Mammary epithelial cell (primary cell): ENCODE measurements at regions of chr21 and their contacts with region 1.

Region 1: GRCh38 chr21:38805328-38806152 is at the start of gene ETS2:
- DNase-seq: peak; percentile 92
- H3K4me3 ChIP-seq: peak within 1 kb of the TSS; percentile 88 to 93 (median 89)
- H3K27ac ChIP-seq: peak within 1 kb of the TSS; percentile 90
- H3K4me1 ChIP-seq: peaks cover 46% of the 10 kb centered on the region
- H3K27me3 ChIP-seq: no peaks in the 10 kb centered on the region
- CTCF ChIP-seq: no peak
- total RNA-seq, gene ETS2: 60.3 to 62.3 TPM

Region 2: GRCh38 chr21:38733973-38734546 is 71.5 kb before region 1 on chr21:
- CTCF ChIA-PET with region 1: no interaction called
- dilution Hi-C with region 1: no loop called
- in situ Hi-C with region 1: loop called in 1 of 2 experiments (anchors 5 kb)
- intact Hi-C with region 1: loop called (anchors 1 kb)
- DNase-seq: peak; percentile 46
- H3K4me3 ChIP-seq: no peak overlapping the region
- H3K27ac ChIP-seq: no peak overlapping the region
- H3K4me1 ChIP-seq: peaks cover 15% of the 10 kb centered on the region
- H3K27me3 ChIP-seq: no peaks in the 10 kb centered on the region
- CTCF ChIP-seq: peak; percentile 94 to 97

Region 3: DNA sequence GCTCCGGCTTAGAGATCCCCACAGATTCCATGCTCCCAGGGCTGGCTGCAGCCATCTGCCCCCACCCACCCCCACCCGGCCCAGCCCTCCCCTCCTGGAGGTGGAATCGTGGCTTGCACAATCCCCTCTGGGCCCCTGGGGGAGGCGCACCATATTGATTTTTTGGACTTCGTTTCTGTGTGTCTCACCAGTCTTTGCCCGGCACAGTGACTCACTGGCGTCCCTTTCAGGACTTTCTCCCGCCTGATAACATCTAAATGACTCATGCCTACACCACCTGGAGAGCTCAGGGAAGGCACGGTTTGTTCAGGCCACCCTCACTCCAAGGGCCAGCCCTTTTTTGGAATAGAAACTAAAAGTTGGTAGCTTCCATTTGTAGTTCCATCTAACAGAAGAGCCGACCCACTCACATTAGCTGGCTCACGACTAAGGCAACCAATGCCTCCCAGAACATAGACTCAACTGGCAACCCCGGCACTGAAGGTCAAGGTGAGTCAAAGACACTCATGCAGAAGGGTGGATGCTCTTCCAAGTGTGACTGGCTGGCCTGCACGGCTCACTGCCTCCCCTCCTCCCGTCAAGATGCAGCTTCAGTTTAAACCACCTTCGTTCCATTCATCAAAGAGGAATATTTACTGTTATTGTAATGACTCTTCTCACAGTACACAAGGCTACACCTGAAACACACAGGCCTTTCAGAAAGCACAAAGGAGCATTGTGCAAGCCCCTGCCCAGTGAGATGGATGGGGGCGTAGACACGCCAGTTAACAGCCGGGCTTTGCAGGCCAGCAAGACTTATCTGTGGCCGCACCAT is 17.9 kb before region 1 on chr21:
- CTCF ChIA-PET with region 1: no interaction called
- dilution Hi-C with region 1: no loop called
- in situ Hi-C with region 1: no loop called
- intact Hi-C with region 1: loop called (anchors 1 kb)
- DNase-seq: peak; percentile 99
- H3K4me3 ChIP-seq: peak overlapping the region in 2 of 3 experiments; percentile 33 to 41
- H3K27ac ChIP-seq: peak overlapping the region; percentile 89
- H3K4me1 ChIP-seq: peaks cover 15% of the 10 kb centered on the region
- H3K27me3 ChIP-seq: no peaks in the 10 kb centered on the region
- CTCF ChIP-seq: no peak

Region 4: GRCh38 chr21:38853421-38853919 is 47.9 kb after region 1 on chr21:
- CTCF ChIA-PET with region 1: no interaction called
- dilution Hi-C with region 1: no loop called
- in situ Hi-C with region 1: no loop called
- intact Hi-C with region 1: no loop called
- DNase-seq: peak; percentile 98
- H3K4me3 ChIP-seq: no peak overlapping the region
- H3K27ac ChIP-seq: peak overlapping the region; percentile 45
- H3K4me1 ChIP-seq: peaks cover 28% of the 10 kb centered on the region
- H3K27me3 ChIP-seq: no peaks in the 10 kb centered on the region
- CTCF ChIP-seq: no peak

Region 5: DNA sequence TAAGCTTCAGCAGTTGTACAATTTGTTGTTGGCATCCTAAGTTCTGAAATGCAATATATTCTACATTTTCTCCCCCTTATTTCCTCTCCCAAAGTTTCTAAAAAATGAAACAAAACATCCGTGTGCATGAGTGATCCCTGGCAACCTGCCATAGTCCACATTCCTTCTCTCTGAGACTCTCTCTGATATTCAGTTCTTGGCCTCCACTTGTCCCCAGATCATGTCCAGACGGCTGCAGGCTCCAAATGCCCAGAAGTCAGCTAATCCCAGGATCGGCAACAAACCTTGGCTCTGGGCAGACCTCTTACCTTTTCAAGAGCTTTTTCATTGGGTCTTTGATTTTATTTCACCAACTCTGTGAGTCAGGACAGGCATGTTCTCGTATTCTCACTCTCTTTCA is 188.0 kb after region 1 on chr21:
- CTCF ChIA-PET with region 1: no interaction called
- dilution Hi-C with region 1: no loop called
- in situ Hi-C with region 1: no loop called
- intact Hi-C with region 1: loop called (anchors 5 kb)
- DNase-seq: peak; percentile 92
- H3K4me3 ChIP-seq: peak overlapping the region in 1 of 3 experiments; percentile 3
- H3K27ac ChIP-seq: peak overlapping the region; percentile 86
- H3K4me1 ChIP-seq: peaks cover 40% of the 10 kb centered on the region
- H3K27me3 ChIP-seq: no peaks in the 10 kb centered on the region
- CTCF ChIP-seq: no peak

Region 6: GRCh38 chr21:39125752-39126485 is 320.4 kb after region 1 on chr21:
- CTCF ChIA-PET with region 1: no interaction called
- dilution Hi-C with region 1: loop called (anchors 10 kb)
- in situ Hi-C with region 1: loop called in 1 of 2 experiments (anchors 10 kb)
- intact Hi-C with region 1: loop called (anchors 1 kb)
- DNase-seq: peak; percentile 62
- H3K4me3 ChIP-seq: no peak overlapping the region
- H3K27ac ChIP-seq: no peak overlapping the region
- H3K4me1 ChIP-seq: no peaks in the 10 kb centered on the region
- H3K27me3 ChIP-seq: no peaks in the 10 kb centered on the region
- CTCF ChIP-seq: peak; percentile 54 to 79